ENCODE measurements at regions of chr14 and their contacts with region 1.

Region 1: GRCh38 chr14:72904840-72905561 is 11.1 kb upstream of the DPF3 start:
- DNase-seq: no peak
- H3K4me3 ChIP-seq: no peak overlapping the region
- CTCF ChIP-seq: peak; percentile 83

Region 2: DNA sequence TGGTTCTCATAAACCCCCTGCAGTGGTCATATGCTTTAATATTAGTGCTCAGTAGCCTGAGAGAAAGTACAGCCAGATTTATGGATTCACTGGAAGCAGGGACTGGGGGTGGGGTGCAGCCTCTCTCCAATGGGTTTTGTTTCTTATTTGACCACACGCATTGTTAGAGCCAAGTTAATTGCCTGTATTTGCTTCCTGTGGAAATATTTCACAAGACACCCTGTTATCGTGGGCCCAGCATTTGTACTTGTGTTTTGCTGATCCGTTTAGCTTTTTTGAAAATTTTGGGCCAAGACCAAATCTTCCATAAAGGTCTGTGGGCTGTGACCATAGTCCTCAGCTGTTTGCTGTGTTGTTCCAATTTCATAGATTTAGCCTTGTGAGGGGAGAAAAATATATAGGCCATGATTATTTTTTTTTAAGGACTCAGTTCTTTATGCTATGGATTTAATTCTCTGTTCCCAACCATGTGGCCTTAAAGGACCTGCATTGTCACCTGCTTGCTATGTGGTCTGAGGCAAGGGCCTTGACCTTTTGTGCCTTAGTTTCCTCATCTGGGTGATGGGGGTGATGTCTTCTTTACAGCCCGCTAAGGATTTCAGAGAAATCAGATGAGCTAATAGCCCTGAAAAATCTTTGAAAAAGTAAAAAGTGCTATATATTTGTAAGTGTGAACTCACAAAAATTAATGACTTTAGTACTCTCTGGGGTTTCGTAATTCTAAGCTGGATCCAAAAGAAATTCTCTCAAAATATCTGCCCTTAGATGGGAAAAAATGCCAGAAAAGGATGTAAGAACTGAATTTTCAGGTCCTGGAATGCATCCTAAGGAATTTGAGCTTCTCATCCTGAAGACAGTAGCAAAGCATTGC is 381.3 kb before region 1 on chr14:
- CTCF ChIA-PET with region 1: interaction called, 299 read pairs
- POLR2A ChIA-PET with region 1: no interaction called
- DNase-seq: no peak
- H3K4me3 ChIP-seq: no peak overlapping the region
- CTCF ChIP-seq: no peak

Region 3: GRCh38 chr14:72643317-72643801 is 261.6 kb before region 1 on chr14:
- CTCF ChIA-PET with region 1: interaction called, 17 read pairs
- POLR2A ChIA-PET with region 1: no interaction called
- DNase-seq: peak; percentile 95
- H3K4me3 ChIP-seq: no peak overlapping the region
- CTCF ChIP-seq: no peak

Region 4: GRCh38 chr14:72736314-72736715 is 168.7 kb before region 1 on chr14:
- CTCF ChIA-PET with region 1: interaction called, 19 read pairs
- POLR2A ChIA-PET with region 1: no interaction called
- DNase-seq: peak; percentile 69
- H3K4me3 ChIP-seq: no peak overlapping the region
- CTCF ChIP-seq: peak; percentile 40

Region 5: DNA sequence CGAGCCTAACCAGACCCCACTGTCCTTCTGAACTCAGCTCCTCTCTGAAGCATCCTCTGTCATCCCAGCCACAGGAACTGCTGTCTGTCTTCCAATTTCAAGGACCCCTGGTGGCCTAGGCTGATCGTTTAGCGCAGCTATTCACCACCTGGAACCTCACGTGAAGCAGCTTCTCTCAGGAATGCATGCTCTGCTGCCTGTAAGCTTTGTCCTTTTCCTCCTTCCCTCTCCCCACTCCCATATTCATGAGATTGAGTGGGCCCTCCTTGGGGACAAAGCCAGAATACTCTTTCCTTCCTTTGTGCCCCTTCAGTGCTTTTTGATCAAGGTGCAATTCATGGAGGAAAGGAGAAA is 28.3 kb before region 1 on chr14:
- CTCF ChIA-PET with region 1: no interaction called
- POLR2A ChIA-PET with region 1: no interaction called
- DNase-seq: no peak
- H3K4me3 ChIP-seq: no peak overlapping the region
- CTCF ChIP-seq: no peak

Region 6: DNA sequence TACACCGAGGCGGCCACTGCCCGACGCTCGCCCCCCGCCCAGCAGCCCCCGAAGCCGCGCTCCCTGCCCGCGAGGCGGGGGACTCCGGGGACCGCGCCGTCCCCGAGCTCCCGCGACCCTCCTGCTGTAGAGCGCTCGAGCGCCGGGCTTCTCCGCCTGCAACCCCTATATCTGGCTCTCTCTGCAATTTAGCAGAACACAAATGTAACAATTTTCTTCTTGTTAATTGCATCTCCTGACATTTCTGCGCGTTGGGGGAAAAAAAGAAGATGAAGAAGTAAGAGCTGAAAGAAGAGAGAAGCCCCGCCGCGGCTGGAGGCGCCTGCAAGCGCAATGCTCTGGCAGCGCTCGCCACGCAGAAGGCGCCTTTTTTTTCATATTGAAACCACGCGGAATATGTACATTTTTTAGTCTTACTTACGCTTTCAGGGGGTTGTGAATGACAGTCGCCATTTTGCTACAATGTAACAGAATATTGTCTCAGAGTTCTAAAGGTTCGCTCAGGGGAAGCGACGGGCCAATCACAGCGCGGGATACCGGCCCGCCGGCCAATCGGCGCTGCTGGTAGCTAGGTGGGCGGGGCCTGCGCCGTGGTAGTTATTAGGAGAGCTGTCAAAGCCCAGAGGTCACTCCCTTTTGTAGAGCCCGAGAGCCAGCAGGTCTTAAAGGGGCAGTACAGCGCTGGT is 11.2 kb before region 1 on chr14 and contains the start of gene DPF3:
- CTCF ChIA-PET with region 1: interaction called, 33 read pairs
- POLR2A ChIA-PET with region 1: interaction called, 3 read pairs
- DNase-seq: peak; percentile 73
- H3K4me3 ChIP-seq: peak within 1 kb of the TSS; percentile 80
- CTCF ChIP-seq: no peak

Region 7: DNA sequence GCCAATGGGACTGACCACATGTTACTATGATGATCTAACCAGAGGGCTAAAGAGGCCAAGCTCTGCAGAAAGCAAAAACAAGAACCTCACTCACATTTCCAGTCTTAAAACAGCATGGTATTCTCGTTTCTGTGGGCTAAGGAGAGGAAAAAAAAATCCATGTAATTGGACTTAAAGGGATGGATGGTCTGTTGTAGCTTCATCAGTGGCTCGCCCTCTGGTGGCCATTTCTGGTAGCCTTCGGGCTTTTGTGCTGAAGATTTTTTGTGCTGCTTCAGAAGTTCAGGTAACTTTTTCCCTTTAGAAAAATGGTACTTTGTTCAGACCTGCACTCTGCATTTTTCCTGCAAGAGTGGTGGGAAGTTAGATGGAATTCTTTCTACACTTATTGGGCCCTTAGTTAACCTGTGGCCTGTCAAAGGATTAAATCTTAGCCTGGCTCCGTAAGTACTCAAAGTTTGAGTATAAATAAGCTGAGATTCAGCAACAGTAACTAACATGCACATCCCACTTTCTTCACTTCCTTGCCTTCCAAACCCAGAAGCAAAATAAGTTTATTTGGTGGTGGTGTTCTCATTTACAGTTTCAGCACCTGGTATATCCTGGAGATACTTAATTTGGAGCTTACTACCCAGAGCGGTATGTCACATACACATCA is 43.6 kb after region 1 on chr14:
- CTCF ChIA-PET with region 1: interaction called, 43 read pairs
- POLR2A ChIA-PET with region 1: no interaction called
- DNase-seq: no peak
- H3K4me3 ChIP-seq: no peak overlapping the region
- CTCF ChIP-seq: peak; percentile 75

Measured in AG04449 (cell line).